SK-N-SH (cell line): ENCODE measurements at regions of chr11 and their contacts with region 1.

Region 1: DNA sequence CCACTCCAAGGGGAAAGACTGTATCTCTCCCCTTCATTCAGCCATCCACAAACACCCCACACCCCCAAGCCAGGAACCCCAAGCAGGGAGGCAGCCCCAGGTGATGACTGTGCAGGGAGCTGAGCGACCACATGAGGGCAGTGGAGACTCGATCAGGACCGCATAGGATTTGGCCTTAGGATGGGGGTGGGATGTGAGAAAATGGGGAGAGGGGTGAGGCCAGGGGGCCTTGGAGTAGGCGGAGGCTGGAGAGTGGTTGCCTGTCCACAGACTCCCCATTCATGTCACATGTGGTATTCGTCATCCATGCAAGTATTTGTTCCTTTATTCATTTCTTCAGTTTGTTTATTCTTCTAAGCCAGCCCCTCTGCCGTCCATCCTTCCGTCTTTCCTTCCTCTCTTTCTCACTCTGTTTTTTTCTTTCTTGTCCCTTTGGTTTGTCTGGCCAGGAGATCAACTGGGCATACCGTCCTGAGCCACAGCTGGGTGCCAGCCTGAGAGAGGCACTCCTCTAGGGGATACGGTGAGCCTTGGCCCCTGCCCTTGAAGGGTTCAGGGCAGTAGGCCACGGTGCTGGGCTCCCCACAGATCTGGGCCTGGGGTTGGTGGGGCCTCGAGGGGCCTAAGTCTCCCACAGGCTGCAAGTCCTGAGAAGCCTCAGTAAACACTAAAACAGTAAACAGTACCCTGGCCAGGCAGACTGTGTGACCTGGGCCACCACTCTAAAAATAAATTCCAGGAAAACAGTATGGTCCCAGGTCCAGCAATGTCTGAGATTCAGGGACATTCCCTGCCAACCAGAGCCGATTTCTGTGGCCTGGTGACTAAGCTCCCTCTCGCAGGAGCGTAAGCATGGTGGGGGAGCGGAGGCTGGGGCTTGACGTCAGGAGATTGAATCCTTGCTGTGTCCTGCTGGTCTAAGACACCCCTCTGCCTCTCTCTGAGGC is 2.5 kb upstream of the RHOD start:
- DNase-seq: peak; percentile 92
- H3K4me3 ChIP-seq: no peak overlapping the region; a peak in 1 of 4 replicates
- H3K27ac ChIP-seq: peak overlapping the region in 1 of 2 experiments; percentile 59; a peak in 2 of 4 replicates
- H3K4me1 ChIP-seq: peaks cover 9 to 12% of the 10 kb centered on the region in 2 experiments; a peak in 2 of 4 replicates
- H3K27me3 ChIP-seq: no peaks in the 10 kb centered on the region
- CTCF ChIP-seq: peak; percentile 79
- EP300 ChIP-seq: no peak
- RAD21 ChIP-seq: peak; percentile 75

Region 2: DNA sequence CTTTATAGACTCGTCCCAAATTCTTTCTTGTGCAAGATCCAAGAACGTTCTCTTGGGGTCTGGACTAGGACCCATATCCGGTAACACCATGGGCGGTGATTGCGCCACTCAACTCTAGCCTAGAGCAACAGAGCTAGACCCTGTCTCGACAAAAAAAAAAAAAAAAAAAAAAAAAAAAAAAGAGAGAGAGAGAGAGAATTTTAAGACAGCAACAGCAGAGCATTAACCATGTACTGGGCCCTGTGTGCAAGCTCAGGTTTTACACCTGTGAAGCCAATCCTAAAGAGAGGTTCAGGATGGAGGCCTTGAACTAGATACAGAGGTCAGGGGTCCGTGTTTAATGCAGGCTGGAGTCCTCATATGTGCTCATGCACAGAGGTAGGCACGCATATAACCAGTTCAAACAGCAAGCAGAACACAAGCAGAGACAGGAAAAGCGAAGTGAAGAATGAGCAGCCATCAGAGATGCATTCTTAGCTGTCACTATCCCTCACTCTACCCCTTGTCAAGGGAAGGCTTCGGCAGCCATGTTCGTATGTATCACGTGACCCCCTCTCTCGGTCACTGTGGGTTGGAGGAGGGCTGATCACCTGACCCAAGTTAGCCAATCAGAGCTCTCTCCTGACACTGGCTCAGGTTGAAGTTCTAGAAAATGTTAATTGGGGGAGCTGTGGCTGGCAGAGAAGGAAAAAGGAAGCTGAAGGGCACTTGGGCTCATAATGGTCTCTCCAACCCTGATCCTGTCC is 47.9 kb before region 1 on chr11:
- CTCF ChIA-PET with region 1: no interaction called
- POLR2A ChIA-PET with region 1: no interaction called
- DNase-seq: peak; percentile 61
- H3K4me3 ChIP-seq: no peak overlapping the region
- H3K27ac ChIP-seq: no peak overlapping the region
- H3K4me1 ChIP-seq: peaks cover 0 to 3% of the 10 kb centered on the region in 2 experiments; a peak in 1 of 4 replicates
- H3K27me3 ChIP-seq: no peaks in the 10 kb centered on the region
- CTCF ChIP-seq: no peak
- EP300 ChIP-seq: no peak
- RAD21 ChIP-seq: no peak

Region 3: GRCh38 chr11:67027483-67028196 is 26.5 kb before region 1 on chr11:
- CTCF ChIA-PET with region 1: interaction called, 12 read pairs
- POLR2A ChIA-PET with region 1: no interaction called
- DNase-seq: no peak
- H3K4me3 ChIP-seq: no peak overlapping the region
- H3K27ac ChIP-seq: no peak overlapping the region
- H3K4me1 ChIP-seq: peaks cover 7 to 10% of the 10 kb centered on the region in 2 experiments; a peak in 2 of 4 replicates
- H3K27me3 ChIP-seq: no peaks in the 10 kb centered on the region
- CTCF ChIP-seq: no peak
- EP300 ChIP-seq: no peak
- RAD21 ChIP-seq: no peak

Region 4: DNA sequence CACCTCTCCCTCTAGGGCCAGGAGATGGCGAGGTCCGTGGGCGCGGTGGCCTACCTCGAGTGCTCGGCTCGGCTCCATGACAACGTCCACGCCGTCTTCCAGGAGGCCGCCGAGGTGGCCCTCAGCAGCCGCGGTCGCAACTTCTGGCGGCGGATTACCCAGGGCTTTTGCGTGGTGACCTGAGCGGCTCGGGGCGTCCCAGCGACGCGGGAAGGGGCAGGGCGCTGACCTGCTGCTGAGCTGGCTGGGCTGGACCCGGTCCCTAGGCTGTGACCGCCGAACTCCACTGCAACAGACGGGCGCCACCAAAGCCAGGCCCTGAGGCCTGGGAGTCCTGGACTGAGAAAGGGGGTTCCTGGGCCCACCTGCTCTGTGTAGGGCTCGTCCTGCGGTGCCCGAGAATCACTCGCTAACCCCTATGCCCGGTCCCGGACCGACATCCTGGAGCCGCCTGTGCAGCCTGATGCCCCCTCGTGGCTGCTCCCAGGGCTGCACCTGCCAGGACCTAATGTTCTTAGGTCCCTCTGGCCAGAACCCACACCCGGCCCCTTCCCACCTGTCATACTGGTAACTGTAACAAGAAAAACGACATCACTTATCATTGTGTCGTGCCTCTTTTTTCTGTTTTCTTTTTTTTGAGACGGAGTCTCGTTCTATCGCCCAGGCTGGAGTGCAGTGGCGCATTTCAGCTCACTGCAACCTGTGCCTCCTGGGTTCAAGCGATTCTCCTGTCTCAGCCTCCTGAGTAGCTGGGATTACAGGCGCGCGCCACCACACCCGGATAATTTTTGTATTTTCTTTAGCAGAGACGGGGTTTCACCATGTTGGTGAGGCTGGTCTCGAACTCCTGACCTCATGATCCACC is 17.5 kb after region 1 on chr11:
- CTCF ChIA-PET with region 1: interaction called, 18 read pairs
- POLR2A ChIA-PET with region 1: interaction called, 3 read pairs
- DNase-seq: peak; percentile 93
- H3K4me3 ChIP-seq: peak overlapping the region in 1 of 2 experiments; percentile 44; a peak in 1 of 4 replicates
- H3K27ac ChIP-seq: no peak overlapping the region
- H3K4me1 ChIP-seq: no peaks in the 10 kb centered on the region
- H3K27me3 ChIP-seq: no peaks in the 10 kb centered on the region
- CTCF ChIP-seq: peak; percentile 78
- EP300 ChIP-seq: no peak
- RAD21 ChIP-seq: peak; percentile 55